Activated CD4-positive, alpha-beta memory T cell treated with anti-CD3 and anti-CD28 coated beads, Interleukin-2, amount 10 ng/mL, durations not matched to agents 7 days and 5 days (primary cell): ENCODE measurements at regions of chr1 and their contacts with region 1.

Region 1: DNA sequence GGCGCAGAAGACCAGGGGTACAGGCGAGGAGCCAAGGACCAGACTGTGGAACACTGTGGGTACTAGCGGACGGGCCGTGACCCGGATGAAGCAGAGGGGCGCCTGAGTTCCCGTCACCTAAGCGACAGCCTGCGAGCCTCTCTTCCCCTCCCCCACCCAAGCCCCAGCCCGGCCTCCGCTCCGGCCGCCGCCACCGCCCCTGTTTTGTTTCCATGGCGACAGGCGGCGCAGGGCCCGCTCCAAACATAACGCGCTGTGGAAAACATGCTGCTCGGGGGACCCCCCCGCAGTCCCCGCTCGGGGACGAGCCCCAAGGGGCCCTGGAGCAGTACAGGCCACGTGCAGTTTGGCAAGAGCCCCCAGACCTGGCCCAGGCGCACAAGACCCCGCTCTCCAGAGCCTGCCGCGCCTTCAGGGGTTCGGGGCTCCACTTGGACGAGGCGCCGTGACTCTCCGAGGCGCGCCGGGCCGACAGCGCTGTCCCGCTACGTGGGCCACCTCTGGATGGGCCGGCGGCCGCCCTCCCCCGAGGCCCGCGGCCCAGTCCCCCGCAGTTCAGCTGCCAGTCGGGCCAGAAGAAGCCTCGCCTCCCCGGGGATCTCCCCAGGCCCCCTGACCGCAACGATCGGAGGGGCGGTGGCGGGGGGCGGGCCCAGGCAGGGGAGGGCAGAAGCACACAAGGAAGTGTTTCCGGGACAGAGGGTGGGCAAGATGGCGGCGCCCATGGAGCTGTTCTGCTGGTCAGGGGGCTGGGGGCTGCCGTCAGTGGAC is at the start of gene MTX1:
- DNase-seq: peak; percentile 89
- H3K4me3 Mint-ChIP-seq: peak within 1 kb of the TSS; percentile 85
- H3K27ac Mint-ChIP-seq: peak within 1 kb of the TSS; percentile 80
- H3K4me1 Mint-ChIP-seq: peaks cover 40% of the 10 kb centered on the region
- H3K27me3 Mint-ChIP-seq: no peaks in the 10 kb centered on the region
- total RNA-seq, gene MTX1: 41.2 to 43.1 TPM

Region 2: DNA sequence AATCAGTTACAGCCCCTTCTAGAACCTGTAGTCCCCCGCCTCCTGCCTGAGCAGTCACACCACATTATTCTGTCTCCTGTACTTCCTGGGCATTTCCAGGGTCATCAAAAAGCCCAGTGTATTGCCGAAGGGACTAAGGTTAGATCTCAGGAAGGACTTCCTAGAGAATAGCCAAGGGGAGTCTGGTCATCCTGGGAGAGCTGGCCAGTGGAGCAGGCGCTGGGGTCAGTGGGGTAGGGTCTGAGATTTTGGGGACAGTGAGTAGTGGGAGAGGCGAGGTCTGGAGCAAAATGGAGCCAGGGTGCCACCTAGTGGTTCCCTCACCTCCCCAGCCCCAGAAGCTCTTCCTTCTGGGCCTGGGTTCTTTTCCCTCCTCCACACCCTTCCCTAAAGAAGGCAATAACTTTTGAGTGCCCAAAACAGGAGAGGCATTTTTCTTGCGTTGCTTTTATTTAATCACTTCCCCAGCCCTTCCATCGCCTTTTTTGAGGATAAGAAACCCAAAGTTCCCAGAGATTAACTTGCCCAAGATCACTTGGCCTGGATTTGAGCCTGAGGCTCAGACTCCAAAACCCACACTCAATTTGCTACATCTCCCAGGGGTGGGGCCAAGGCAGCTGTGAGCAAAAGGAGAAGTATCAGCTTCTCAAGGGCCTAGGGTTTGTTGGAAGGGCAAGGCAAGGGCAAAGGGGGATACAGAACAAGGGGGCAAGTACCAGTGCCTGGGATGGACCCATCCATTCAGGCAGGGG is 264.9 kb before region 1 on chr1:
- CTCF ChIA-PET with region 1: no interaction called
- POLR2A ChIA-PET with region 1: no interaction called
- DNase-seq: peak; percentile 53
- H3K4me3 Mint-ChIP-seq: peak overlapping the region; percentile 63
- H3K27ac Mint-ChIP-seq: peak overlapping the region; percentile 96
- H3K4me1 Mint-ChIP-seq: peaks cover 67% of the 10 kb centered on the region
- H3K27me3 Mint-ChIP-seq: no peaks in the 10 kb centered on the region

Region 3: DNA sequence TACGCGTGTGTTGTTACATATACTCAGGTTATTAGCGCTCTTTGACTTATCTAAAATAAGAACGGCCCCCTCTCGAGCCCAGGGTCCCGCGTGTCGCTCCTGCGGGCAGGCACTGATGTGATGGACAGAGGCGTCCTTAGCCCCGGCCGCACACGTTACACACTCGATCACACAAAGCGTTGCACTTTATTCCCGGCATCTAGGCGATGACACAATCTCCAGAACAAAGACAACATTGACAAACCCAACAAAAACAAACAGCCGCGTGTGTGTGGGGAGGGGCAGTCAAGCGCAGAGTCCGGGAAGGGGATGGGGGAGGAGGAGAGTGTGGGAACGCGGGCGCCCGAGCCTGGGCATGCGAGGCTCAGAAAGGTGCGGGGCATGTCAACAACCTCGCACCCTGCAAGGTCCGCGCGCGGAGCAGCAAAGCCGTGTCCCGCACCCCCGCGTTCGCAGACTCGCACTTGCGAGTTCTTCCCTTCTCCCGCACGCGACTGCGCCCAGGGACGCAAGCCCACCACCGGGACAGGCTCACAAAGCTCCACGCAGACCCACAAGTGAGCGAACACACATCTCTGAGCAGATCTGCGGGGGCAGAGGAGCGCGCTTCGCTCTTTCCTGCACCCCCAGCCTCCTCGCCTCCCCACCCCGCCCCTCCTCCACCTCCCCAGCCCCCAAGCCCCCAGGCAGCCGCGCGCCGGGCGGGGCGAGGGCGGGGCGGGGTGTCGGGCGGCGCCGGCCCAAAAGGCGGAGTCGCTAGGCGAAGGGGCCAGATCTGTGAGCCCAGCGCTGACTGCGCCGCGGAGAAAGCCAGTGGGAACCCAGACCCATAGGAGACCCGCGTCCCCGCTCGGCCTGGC is 81.4 kb before region 1 on chr1 and contains the start of gene EFNA1:
- CTCF ChIA-PET with region 1: no interaction called
- POLR2A ChIA-PET with region 1: no interaction called
- DNase-seq: no peak
- H3K4me3 Mint-ChIP-seq: peak within 1 kb of the TSS; percentile 66
- H3K27ac Mint-ChIP-seq: no peak within 1 kb of the TSS
- H3K4me1 Mint-ChIP-seq: peaks cover 31% of the 10 kb centered on the region
- H3K27me3 Mint-ChIP-seq: peaks cover 66% of the 10 kb centered on the region
- total RNA-seq, gene EFNA1: not detected

Region 4: GRCh38 chr1:155218854-155219591 is 10.3 kb after region 1 on chr1:
- CTCF ChIA-PET with region 1: interaction called, 17 read pairs
- POLR2A ChIA-PET with region 1: interaction called, 26 read pairs
- DNase-seq: peak; percentile 33
- H3K4me3 Mint-ChIP-seq: no peak overlapping the region
- H3K27ac Mint-ChIP-seq: peak overlapping the region; percentile 93
- H3K4me1 Mint-ChIP-seq: peaks cover 54% of the 10 kb centered on the region
- H3K27me3 Mint-ChIP-seq: no peaks in the 10 kb centered on the region

Region 5: GRCh38 chr1:155227261-155228095 is 18.8 kb after region 1 on chr1:
- CTCF ChIA-PET with region 1: interaction called, 22 read pairs
- POLR2A ChIA-PET with region 1: interaction called, 68 read pairs
- DNase-seq: peak; percentile 100
- H3K4me3 Mint-ChIP-seq: peak overlapping the region; percentile 81
- H3K27ac Mint-ChIP-seq: peak overlapping the region; percentile 89
- H3K4me1 Mint-ChIP-seq: peaks cover 44% of the 10 kb centered on the region
- H3K27me3 Mint-ChIP-seq: no peaks in the 10 kb centered on the region